ENCODE measurements at regions of chr2 and their contacts with region 1.

Region 1: DNA sequence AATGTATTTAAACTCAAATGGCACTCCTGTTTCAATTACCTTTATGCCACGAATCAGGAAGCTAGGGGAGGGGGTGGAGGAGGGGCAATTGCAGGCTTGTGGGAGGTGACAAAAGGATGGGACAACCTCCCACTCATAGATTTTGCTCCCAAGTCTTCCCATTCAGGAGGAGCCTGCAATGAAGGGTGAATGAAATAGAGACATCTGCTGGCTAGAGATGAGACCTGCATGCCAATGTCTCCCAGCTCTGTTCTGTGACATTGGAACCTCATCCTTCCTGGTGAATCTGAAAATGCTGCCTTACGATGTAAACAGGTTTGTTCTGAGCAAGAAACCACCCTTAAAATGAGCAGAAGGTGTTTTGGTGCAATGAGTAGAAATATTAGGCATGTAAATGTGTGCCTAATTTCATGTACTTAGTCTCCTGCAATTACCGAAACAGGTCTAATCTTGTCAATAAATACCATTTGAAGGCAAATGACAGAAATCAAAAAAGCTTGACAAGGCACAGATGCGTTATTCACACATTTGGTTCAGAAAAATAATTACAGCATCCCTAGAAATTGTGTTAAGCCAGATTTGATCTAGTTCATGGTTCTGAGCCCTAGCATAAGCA is 2.7 kb upstream of the PID1 start:
- DNase-seq: peak; percentile 85
- ATAC-seq: peak; percentile 89
- H3K4me3 ChIP-seq: peak overlapping the region; percentile 52
- H3K27ac ChIP-seq: no peak overlapping the region
- H3K4me1 ChIP-seq: peaks cover 8% of the 10 kb centered on the region; the same call in 1 of the 2 replicates
- H3K27me3 ChIP-seq: peaks cover 16% of the 10 kb centered on the region; the same call in 1 of the 2 replicates
- CTCF ChIP-seq: peak; percentile 84

Region 2: DNA sequence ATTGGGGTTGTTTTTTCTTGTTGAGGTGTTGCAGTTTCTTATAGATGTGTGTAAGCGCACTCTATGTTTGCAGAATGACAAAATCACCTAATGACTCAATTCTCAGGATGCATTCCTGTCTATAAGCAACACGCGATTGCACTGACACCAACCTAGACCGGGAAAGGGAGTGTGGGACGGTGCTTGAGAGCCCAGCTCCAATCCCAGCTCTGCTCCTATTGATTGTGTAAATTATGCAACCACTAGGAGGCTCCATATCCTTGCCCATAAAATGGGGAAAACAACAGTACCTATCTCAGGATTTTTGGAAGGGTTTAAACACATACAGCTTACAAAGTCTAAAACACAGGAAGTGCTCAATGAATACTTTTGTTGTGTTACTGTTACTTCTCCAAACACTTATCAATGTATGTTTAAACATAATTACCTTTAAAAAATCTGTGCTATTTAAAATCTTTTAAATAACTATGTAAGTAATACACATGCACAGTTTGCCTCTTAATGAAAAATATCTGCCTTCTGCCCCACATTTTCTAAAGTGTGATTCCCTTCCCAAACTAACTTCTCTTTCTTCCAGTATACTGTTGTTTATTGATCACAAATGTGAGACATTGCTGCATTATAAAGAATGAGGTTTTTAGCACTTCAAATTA is 1224.9 kb before region 1 on chr2:
- CTCF ChIA-PET with region 1: no interaction called
- POLR2A ChIA-PET with region 1: no interaction called
- intact Hi-C with region 1: loop called (anchors 2 kb)
- DNase-seq: peak; percentile 95
- ATAC-seq: peak; percentile 99
- H3K4me3 ChIP-seq: no peak overlapping the region
- H3K27ac ChIP-seq: 0 out of 2 replicates have a peak overlapping the region, but pooled peaks have one; percentile 49
- H3K4me1 ChIP-seq: peaks cover 15% of the 10 kb centered on the region
- H3K27me3 ChIP-seq: no peaks in the 10 kb centered on the region
- CTCF ChIP-seq: peak; percentile 81

Region 3: DNA sequence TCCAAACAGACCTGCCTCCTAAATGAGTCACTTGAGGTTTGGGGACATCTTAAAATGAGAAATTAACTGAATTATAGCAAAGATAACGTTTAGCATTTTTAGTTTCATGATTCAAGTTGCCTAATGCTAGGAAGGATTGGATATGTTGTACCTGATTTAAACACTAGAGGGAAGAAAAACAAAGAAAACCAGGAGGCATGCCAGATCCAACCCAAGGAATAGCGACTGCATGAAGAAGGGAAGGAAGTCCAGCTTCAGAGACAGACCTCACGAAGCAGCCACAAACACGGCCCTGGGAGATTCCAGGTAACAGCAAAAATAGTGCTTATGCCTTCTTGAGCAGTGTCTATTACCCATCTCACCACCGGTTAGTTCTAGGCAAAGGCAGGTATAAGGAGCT is 592.4 kb before region 1 on chr2:
- CTCF ChIA-PET with region 1: no interaction called
- POLR2A ChIA-PET with region 1: no interaction called
- intact Hi-C with region 1: loop called (anchors 1 kb)
- DNase-seq: peak; percentile 66
- ATAC-seq: peak; percentile 61
- H3K4me3 ChIP-seq: no peak overlapping the region
- H3K27ac ChIP-seq: no peak overlapping the region
- H3K4me1 ChIP-seq: no peaks in the 10 kb centered on the region
- H3K27me3 ChIP-seq: 0 out of 2 replicates have a peak, but pooled peaks cover 8% of the 10 kb centered on the region
- CTCF ChIP-seq: peak; percentile 66

Region 4: DNA sequence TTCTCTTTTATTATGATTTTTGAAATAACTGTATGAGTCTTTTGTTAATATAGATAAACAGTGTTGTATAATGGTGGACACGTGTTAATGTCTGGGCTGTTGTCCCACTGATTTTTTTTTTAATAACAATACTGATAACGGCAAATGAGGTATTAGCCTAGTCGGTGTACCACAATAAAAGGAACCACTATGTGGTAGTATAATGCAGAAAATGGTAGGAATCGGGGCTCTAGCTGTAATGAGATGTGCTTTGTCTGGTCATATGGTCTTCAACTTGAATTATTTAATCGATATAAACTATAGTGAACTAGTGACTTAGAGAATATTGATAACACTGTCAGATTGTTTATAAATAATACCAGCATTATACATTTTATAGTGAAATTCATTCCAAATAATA is 574.4 kb before region 1 on chr2:
- CTCF ChIA-PET with region 1: no interaction called
- POLR2A ChIA-PET with region 1: no interaction called
- intact Hi-C with region 1: loop called (anchors 5 kb)
- DNase-seq: peak; percentile 5
- ATAC-seq: peak; percentile 45; the same call in 1 of the 2 replicates
- H3K4me3 ChIP-seq: no peak overlapping the region
- H3K27ac ChIP-seq: no peak overlapping the region
- H3K4me1 ChIP-seq: peaks cover 19% of the 10 kb centered on the region
- H3K27me3 ChIP-seq: no peaks in the 10 kb centered on the region
- CTCF ChIP-seq: peak; percentile 47; the same call in 1 of the 2 replicates

Region 5: DNA sequence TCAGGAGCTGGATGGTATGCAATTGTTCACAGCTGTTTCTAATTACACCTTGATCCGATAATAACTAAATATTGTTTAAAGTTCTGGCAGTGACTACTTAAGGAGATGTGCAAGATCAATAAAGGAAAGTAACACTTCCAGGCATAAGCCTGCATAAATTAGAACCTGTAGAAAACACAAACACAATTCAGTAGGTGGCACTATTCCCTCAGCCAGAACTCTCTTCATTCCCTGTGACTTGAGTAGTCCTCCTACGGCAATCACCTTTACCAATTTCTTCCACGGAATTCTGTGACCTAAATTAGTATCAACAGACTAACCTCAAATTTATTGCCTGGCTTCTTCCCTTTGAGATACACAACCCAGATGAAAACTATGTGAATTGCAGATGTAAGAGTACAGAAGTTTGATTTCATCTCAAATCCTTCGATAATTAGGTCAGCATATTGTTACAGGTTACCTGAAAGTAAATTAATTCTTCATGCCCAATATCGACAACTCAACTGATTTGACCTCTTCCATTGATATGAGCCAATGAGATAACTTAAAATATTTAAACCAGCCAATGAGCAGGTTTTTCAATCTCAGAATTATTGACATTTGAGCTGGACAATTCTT is 140.6 kb before region 1 on chr2:
- CTCF ChIA-PET with region 1: interaction called, 3 read pairs
- POLR2A ChIA-PET with region 1: no interaction called
- intact Hi-C with region 1: loop called (anchors 1 kb)
- DNase-seq: peak; percentile 78
- ATAC-seq: peak; percentile 75
- H3K4me3 ChIP-seq: no peak overlapping the region
- H3K27ac ChIP-seq: no peak overlapping the region
- H3K4me1 ChIP-seq: no peaks in the 10 kb centered on the region
- H3K27me3 ChIP-seq: peaks cover 6% of the 10 kb centered on the region; the same call in 1 of the 2 replicates
- CTCF ChIP-seq: peak; percentile 84

Region 6: GRCh38 chr2:229330952-229331351 is 57.1 kb after region 1 on chr2:
- CTCF ChIA-PET with region 1: no interaction called
- POLR2A ChIA-PET with region 1: no interaction called
- intact Hi-C with region 1: no loop called
- DNase-seq: no peak
- ATAC-seq: no peak
- H3K4me3 ChIP-seq: no peak overlapping the region
- H3K27ac ChIP-seq: no peak overlapping the region
- H3K4me1 ChIP-seq: no peaks in the 10 kb centered on the region
- H3K27me3 ChIP-seq: no peaks in the 10 kb centered on the region
- CTCF ChIP-seq: no peak

Region 7: DNA sequence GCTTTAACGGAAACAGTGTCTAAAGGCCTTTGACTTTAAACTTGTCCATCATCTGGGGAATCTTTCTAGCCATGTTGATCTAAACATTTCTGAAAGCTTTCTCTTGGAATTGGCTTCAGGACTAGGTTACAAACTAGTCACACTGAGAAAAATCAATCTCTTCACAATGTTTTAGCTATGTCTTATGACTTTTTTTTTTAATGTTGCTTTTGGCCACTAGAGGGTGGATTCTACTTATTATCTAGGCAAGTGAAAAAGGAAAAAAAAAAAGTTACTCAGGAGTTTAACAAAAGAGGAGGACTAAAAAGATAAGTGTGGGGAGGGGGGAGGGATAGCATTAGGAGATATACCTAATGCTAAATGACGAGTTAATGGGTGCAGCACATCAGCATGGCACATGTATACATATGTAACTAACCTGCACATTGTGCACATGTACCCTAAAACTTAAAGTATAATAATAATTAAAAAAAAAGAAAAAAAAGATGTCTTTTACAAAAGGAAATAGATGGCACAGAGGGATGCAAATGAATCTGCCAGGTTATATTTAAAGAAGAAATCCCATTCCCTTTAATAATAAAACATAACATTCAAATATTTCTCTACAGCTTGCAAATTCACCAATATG is 157.6 kb after region 1 on chr2:
- CTCF ChIA-PET with region 1: interaction called, 3 read pairs
- POLR2A ChIA-PET with region 1: no interaction called
- intact Hi-C with region 1: loop called (anchors 10 kb)
- DNase-seq: peak; percentile 78
- ATAC-seq: peak; percentile 40; the same call in 1 of the 2 replicates
- H3K4me3 ChIP-seq: no peak overlapping the region
- H3K27ac ChIP-seq: no peak overlapping the region
- H3K4me1 ChIP-seq: peaks cover 7% of the 10 kb centered on the region; the same call in 1 of the 2 replicates
- H3K27me3 ChIP-seq: no peaks in the 10 kb centered on the region
- CTCF ChIP-seq: peak; percentile 67

Region 8: DNA sequence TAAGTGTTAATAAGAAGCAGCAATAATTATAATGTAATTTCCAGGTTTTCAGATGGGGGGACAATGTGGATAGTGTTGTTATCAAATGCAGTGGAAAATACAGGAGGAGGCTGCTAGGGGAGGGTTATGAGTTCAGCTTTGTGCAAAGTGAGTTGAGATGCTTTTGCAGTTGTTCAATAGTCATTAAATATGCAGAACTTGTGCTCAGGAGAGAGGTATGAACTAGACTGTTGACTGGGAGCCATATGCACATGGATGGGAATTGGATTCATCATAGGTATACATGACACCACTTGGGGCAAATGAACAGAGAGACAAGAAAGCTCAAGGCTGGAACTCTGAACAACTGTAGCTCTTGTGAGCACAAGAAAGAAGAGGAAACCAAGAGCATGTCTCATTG is 179.4 kb after region 1 on chr2:
- CTCF ChIA-PET with region 1: no interaction called
- POLR2A ChIA-PET with region 1: interaction called, 36 read pairs
- intact Hi-C with region 1: no loop called
- DNase-seq: no peak
- ATAC-seq: no peak
- H3K4me3 ChIP-seq: no peak overlapping the region
- H3K27ac ChIP-seq: no peak overlapping the region
- H3K4me1 ChIP-seq: peaks cover 12% of the 10 kb centered on the region
- H3K27me3 ChIP-seq: no peaks in the 10 kb centered on the region
- CTCF ChIP-seq: no peak